HepG2 (cell line): ENCODE measurements at regions of chr9 and their contacts with region 1.

Region 1: DNA sequence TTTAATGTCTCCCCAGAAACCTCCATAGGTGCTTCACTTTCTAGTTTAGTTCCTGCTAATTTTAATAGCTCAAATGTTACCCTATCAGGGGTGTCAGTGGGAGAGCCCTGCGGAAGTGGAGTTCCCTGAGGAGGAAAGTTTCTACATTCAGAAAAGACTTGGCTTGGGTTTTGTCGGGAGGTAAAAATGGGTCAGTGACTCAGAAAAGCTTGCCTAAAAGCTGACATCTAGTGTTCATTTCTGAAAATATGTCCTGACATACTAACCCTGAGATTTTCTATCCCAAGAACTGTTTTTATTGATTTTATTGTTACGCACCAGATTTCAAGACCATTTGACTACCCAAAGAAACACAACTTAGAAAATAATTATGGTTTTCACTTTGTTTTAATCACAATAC is 40.9 kb upstream of the GLDC start:
- DNase-seq: peak; percentile 44
- ATAC-seq: no peak
- H3K4me3 ChIP-seq: no peak overlapping the region
- H3K27ac ChIP-seq: peak overlapping the region; percentile 36
- H3K4me1 ChIP-seq: peaks cover 27% of the 10 kb centered on the region
- H3K27me3 ChIP-seq: no peaks in the 10 kb centered on the region
- CTCF ChIP-seq: peak; percentile 41
- EP300 ChIP-seq: no peak
- POLR2A ChIP-seq: no peak
- RAD21 ChIP-seq: no peak

Region 2: GRCh38 chr9:6739218-6739617 is 52.8 kb after region 1 on chr9:
- CTCF ChIA-PET with region 1: no interaction called
- POLR2A ChIA-PET with region 1: no interaction called
- in situ Hi-C with region 1: no loop called
- intact Hi-C with region 1: loop called (anchors 2 kb)
- DNase-seq: peak; percentile 39
- ATAC-seq: peak; percentile 69
- H3K4me3 ChIP-seq: no peak overlapping the region
- H3K27ac ChIP-seq: no peak overlapping the region
- H3K4me1 ChIP-seq: peaks cover 10% of the 10 kb centered on the region
- H3K27me3 ChIP-seq: no peaks in the 10 kb centered on the region
- CTCF ChIP-seq: peak; percentile 63
- EP300 ChIP-seq: no peak
- POLR2A ChIP-seq: no peak
- RAD21 ChIP-seq: peak; percentile 48

Region 3: DNA sequence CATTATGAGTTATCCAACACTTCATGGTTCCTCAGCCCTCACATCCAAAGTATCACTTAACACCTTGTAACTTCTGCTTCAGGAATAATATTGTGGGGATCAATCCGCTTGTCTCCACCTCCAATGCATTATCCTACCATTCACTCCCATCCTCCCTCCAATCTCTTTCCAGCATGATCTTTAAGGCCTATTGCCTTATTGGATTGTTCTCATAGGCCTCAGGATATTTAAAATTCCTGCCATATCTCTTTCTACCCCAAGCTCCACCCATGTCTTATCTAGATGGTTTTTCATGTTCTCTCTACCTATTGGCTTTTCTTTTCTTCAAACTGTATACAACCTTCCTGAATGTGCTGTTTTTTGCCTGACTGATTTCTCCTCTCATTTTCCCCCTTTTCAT is 78.5 kb after region 1 on chr9:
- CTCF ChIA-PET with region 1: no interaction called
- POLR2A ChIA-PET with region 1: no interaction called
- in situ Hi-C with region 1: no loop called
- intact Hi-C with region 1: no loop called
- DNase-seq: no peak
- ATAC-seq: no peak
- H3K4me3 ChIP-seq: no peak overlapping the region
- H3K27ac ChIP-seq: no peak overlapping the region
- H3K4me1 ChIP-seq: peaks cover 71% of the 10 kb centered on the region
- H3K27me3 ChIP-seq: no peaks in the 10 kb centered on the region
- CTCF ChIP-seq: no peak
- EP300 ChIP-seq: no peak
- POLR2A ChIP-seq: no peak
- RAD21 ChIP-seq: no peak